Right ventricle myocardium inferior (tissue), 1 donor: ENCODE measurements at regions of chr7 and their contacts with region 1.

Region 1: GRCh38 chr7:39838326-39838725 is 111.7 kb upstream of the CDK13 start:
- DNase-seq: no peak
- ATAC-seq: no peak

Region 2: DNA sequence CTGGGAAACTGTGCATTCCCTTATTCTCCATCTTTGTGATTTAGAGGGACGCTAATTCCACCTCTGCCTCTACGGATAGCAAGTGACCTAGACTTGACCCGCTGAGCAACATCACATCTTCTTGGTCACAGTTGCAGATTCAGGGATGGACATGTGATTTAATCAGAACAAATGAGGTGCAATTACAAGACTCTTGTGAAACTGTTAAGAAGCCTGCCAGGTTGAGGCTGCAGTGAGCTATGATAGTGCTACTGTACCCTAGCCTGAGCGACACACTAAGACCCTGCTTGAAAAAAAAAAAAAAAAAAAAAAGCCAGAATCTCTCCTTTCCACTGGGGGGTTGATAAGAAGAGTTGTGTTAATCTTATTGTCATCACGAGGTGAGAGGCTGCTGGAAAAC is 281.7 kb after region 1 on chr7:
- intact Hi-C with region 1: loop called (anchors 5 kb)
- DNase-seq: no peak
- ATAC-seq: no peak